Mammary epithelial cell (primary cell): ENCODE measurements at regions of chr3 and their contacts with region 1.

Region 1: GRCh38 chr3:39346785-39347585 is 17.5 kb downstream of the CCR8 start:
- DNase-seq: no peak
- H3K4me3 ChIP-seq: no peak overlapping the region
- H3K27ac ChIP-seq: no peak overlapping the region
- H3K4me1 ChIP-seq: no peaks in the 10 kb centered on the region
- H3K27me3 ChIP-seq: peaks cover 2% of the 10 kb centered on the region
- CTCF ChIP-seq: no peak

Region 2: DNA sequence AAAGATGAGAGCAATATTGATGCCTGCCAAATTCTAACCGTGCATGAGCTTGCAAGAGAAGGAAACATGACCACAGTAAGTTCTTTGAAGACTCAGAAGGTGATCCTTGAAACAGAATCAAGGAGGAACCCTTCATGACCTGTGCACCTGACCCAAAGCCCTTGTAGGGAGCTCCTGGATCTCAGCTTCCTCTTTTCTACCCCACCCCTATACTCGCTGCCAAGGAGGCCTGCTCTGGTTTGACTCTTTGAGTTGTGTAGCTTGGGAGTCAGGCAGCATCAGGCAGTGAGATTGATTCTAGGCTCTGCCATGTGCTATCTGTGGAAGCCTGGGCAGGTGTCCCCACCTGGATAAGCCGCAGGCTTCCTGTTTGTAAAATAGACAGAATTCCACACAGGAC is 228.9 kb before region 1 on chr3:
- CTCF ChIA-PET with region 1: no interaction called
- dilution Hi-C with region 1: no loop called
- in situ Hi-C with region 1: no loop called
- intact Hi-C with region 1: no loop called
- DNase-seq: no peak
- H3K4me3 ChIP-seq: no peak overlapping the region
- H3K27ac ChIP-seq: no peak overlapping the region
- H3K4me1 ChIP-seq: no peaks in the 10 kb centered on the region
- H3K27me3 ChIP-seq: no peaks in the 10 kb centered on the region
- CTCF ChIP-seq: no peak

Region 3: DNA sequence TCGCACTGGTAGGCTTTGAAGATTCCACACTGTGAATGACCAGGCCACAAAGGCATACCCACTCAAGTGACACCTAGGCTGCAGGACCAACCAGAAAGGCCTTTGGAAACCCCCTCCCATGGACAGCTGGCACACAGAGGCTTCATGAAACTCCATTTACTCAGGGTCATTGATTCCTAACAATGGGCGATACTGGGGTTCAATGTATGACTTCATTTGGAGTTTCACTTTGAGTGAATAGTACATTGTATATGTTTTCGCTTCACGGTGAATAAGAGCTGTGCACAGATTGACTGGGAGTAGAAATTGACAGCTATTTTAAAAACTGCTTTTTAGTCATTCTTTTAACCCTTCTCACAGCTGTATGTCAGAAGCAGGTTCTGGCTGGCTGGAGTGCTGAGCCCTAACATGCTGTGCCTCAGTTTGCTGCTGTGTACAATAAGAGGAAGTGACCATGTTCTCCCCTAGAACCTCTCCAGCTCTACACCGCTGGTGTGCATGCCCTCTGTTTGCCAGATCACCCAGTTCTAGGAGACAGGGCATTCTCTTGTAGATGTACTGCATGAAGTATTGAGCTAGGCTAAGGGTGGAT is 51.7 kb before region 1 on chr3:
- CTCF ChIA-PET with region 1: no interaction called
- dilution Hi-C with region 1: no loop called
- in situ Hi-C with region 1: no loop called
- intact Hi-C with region 1: loop called (anchors 1 kb)
- DNase-seq: no peak
- H3K4me3 ChIP-seq: no peak overlapping the region
- H3K27ac ChIP-seq: no peak overlapping the region
- H3K4me1 ChIP-seq: no peaks in the 10 kb centered on the region
- H3K27me3 ChIP-seq: no peaks in the 10 kb centered on the region
- CTCF ChIP-seq: no peak

Region 4: GRCh38 chr3:39378088-39378487 is 31.1 kb after region 1 on chr3:
- CTCF ChIA-PET with region 1: interaction called, 32 read pairs
- dilution Hi-C with region 1: no loop called
- in situ Hi-C with region 1: no loop called
- intact Hi-C with region 1: no loop called
- DNase-seq: peak; percentile 43
- H3K4me3 ChIP-seq: no peak overlapping the region
- H3K27ac ChIP-seq: no peak overlapping the region
- H3K4me1 ChIP-seq: peaks cover 5% of the 10 kb centered on the region
- H3K27me3 ChIP-seq: no peaks in the 10 kb centered on the region
- CTCF ChIP-seq: peak; percentile 84 to 91

Region 5: DNA sequence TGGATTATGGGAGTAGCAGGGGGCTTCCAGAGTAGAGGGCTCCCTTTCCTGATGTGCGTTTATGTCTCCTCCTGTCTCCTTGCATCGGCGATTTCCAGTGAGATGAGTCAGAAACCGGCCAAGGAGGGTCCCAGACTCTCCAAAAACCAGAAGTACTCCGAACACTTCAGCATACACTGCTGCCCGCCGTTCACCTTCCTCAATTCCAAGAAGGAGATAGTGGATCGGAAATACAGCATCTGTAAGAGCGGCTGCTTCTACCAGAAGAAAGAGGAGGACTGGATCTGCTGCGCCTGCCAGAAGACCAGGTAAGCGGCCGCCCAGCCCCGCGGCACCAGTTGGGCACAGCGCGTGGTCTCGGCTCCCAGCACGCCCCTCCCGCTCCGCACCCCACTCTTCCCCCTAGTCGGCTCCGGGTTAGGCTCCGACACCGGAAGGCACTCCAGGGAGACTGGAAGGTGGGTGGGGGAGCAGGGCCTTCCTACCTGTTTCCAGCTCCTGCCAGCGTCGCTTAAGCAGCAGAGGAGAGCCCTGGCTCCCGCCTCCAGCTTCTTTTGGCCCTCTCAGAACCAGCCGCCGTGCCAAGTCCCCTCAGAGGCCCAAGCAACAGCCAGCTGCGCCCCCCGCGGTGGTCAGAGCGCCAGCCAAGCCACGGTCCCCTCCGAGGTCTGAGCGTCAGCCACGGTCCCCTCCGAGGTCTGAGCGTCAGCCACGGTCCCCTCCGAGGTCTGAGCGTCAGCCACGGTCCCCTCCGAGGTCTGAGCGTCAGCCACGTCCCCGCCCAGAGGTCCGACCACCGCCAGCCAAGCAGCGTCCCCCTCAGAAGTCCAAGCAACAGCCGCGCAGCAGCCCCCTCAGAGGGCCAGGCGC is 155.2 kb after region 1 on chr3:
- CTCF ChIA-PET with region 1: no interaction called
- dilution Hi-C with region 1: no loop called
- in situ Hi-C with region 1: no loop called
- intact Hi-C with region 1: no loop called
- DNase-seq: no peak
- H3K4me3 ChIP-seq: peak overlapping the region in 2 of 3 experiments; percentile 43 to 44
- H3K27ac ChIP-seq: no peak overlapping the region
- H3K4me1 ChIP-seq: peaks cover 9% of the 10 kb centered on the region
- H3K27me3 ChIP-seq: peaks cover 27% of the 10 kb centered on the region
- CTCF ChIP-seq: no peak